GM12878 (cell line): ENCODE measurements at regions of chr12 and their contacts with region 1.

Region 1: GRCh38 chr12:24803430-24804245 is 145.3 kb downstream of the BCAT1 start:
- DNase-seq: no peak
- ATAC-seq: no peak; the same call in 2 of the 3 replicates
- H3K4me3 ChIP-seq: no peak overlapping the region
- H3K27ac ChIP-seq: no peak overlapping the region
- H3K4me1 ChIP-seq: no peaks in the 10 kb centered on the region
- H3K27me3 ChIP-seq: no peaks in the 10 kb centered on the region
- CTCF ChIP-seq: no peak
- EP300 ChIP-seq: no peak
- POLR2A ChIP-seq: no peak
- RAD21 ChIP-seq: no peak

Region 2: DNA sequence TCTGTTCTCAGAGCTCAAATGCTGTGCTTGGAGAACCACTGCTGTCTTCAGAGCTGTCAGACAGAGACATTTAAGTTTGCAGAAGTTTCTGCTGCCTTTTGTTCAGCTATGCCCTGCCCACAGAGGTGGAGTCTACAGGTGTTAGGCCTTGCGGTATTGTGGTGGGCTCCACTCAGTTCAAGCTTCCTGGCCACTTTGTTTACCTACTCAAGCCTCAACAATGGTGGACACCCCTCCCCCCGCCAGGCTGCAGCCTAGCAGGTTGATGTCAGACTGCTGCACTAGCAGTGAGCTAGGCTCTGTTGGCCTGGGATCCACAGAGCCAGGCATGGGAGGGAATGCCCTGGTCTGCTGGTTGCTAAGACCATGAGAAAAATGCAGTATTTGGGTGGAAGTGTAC is 178.5 kb before region 1 on chr12:
- CTCF ChIA-PET with region 1: no interaction called
- POLR2A ChIA-PET with region 1: no interaction called
- RAD21 ChIA-PET with region 1: no interaction called
- SMC1A ChIA-PET with region 1: no interaction called
- in situ Hi-C with region 1: no loop called
- intact Hi-C with region 1: no loop called
- DNase-seq: no peak
- ATAC-seq: no peak
- H3K4me3 ChIP-seq: no peak overlapping the region
- H3K27ac ChIP-seq: no peak overlapping the region
- H3K4me1 ChIP-seq: no peaks in the 10 kb centered on the region
- H3K27me3 ChIP-seq: no peaks in the 10 kb centered on the region
- CTCF ChIP-seq: no peak
- EP300 ChIP-seq: no peak
- POLR2A ChIP-seq: no peak
- RAD21 ChIP-seq: no peak

Region 3: GRCh38 chr12:24770821-24771220 is 32.8 kb before region 1 on chr12:
- CTCF ChIA-PET with region 1: no interaction called
- POLR2A ChIA-PET with region 1: no interaction called
- RAD21 ChIA-PET with region 1: no interaction called
- SMC1A ChIA-PET with region 1: no interaction called
- in situ Hi-C with region 1: no loop called
- intact Hi-C with region 1: no loop called
- DNase-seq: no peak
- ATAC-seq: no peak
- H3K4me3 ChIP-seq: no peak overlapping the region
- H3K27ac ChIP-seq: no peak overlapping the region
- H3K4me1 ChIP-seq: no peaks in the 10 kb centered on the region
- H3K27me3 ChIP-seq: no peaks in the 10 kb centered on the region; a peak in 2 of 4 replicates
- CTCF ChIP-seq: no peak
- EP300 ChIP-seq: no peak
- POLR2A ChIP-seq: no peak
- RAD21 ChIP-seq: no peak

Region 4: GRCh38 chr12:24814379-24815113 is 10.9 kb after region 1 on chr12:
- CTCF ChIA-PET with region 1: interaction called, 14 read pairs
- POLR2A ChIA-PET with region 1: interaction called, 8 read pairs
- RAD21 ChIA-PET with region 1: interaction called, 4 read pairs
- SMC1A ChIA-PET with region 1: interaction called, 14 read pairs
- in situ Hi-C with region 1: no loop called
- intact Hi-C with region 1: loop called (anchors 2 kb)
- DNase-seq: peak; percentile 63
- ATAC-seq: peak; percentile 94
- H3K4me3 ChIP-seq: peak overlapping the region; percentile 46; the same call in 1 of the 2 replicates
- H3K27ac ChIP-seq: peak overlapping the region; percentile 63
- H3K4me1 ChIP-seq: peaks cover 17% of the 10 kb centered on the region
- H3K27me3 ChIP-seq: no peaks in the 10 kb centered on the region
- CTCF ChIP-seq: no peak
- EP300 ChIP-seq: peak; percentile 74 to 91; a peak in 3 of 4 replicates
- POLR2A ChIP-seq: no peak
- RAD21 ChIP-seq: no peak